ENCODE measurements at regions of chr6 and their contacts with region 1.

Region 1: GRCh38 chr6:158149641-158150040 is 18.4 kb downstream of the SERAC1 start:
- DNase-seq: peak; percentile 69
- H3K4me3 Mint-ChIP-seq: no peak overlapping the region
- H3K27ac Mint-ChIP-seq: no peak overlapping the region
- H3K4me1 Mint-ChIP-seq: peaks cover 15% of the 10 kb centered on the region
- H3K27me3 Mint-ChIP-seq: no peaks in the 10 kb centered on the region
- CTCF ChIP-seq: no peak

Region 2: DNA sequence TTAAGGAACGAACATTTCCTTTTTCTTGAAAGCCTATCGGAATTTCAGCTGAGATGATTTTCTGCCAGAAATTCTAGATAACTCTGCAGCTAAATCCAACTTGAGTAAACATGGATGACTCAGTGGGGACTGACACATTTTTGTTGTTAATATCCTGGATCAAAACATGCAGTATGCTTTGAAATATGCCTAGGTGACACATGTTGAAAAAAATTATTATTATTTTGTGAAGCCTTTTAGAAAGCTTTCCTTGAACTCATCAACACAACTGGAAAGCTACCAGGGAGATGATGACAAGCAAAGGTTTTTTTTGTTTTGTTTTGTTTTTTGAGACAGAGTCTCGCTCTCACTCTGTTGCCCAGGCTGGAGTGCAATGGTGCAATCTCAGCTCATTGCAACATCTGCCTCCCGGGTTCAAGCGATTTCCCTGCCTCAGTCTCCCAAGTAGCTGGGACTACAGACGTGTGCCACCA is 466.7 kb before region 1 on chr6:
- CTCF ChIA-PET with region 1: no interaction called
- POLR2A ChIA-PET with region 1: no interaction called
- intact Hi-C with region 1: no loop called
- DNase-seq: peak; percentile 64
- H3K4me3 Mint-ChIP-seq: no peak overlapping the region
- H3K27ac Mint-ChIP-seq: peak overlapping the region; percentile 58
- H3K4me1 Mint-ChIP-seq: no peaks in the 10 kb centered on the region
- H3K27me3 Mint-ChIP-seq: no peaks in the 10 kb centered on the region
- CTCF ChIP-seq: no peak

Region 3: GRCh38 chr6:158168040-158168289 is 18.3 kb after region 1 on chr6 and contains the start of gene SERAC1:
- CTCF ChIA-PET with region 1: interaction called, 7 read pairs
- POLR2A ChIA-PET with region 1: interaction called, 13 read pairs
- intact Hi-C with region 1: no loop called
- DNase-seq: no peak
- H3K4me3 Mint-ChIP-seq: peak within 1 kb of the TSS; percentile 92
- H3K27ac Mint-ChIP-seq: peak within 1 kb of the TSS; percentile 91
- H3K4me1 Mint-ChIP-seq: peaks cover 39% of the 10 kb centered on the region
- H3K27me3 Mint-ChIP-seq: no peaks in the 10 kb centered on the region
- CTCF ChIP-seq: no peak
- total RNA-seq, gene SERAC1: 5.3 and 7.4 TPM in 2 replicates